PC-9 (cell line): ENCODE measurements at regions of chr7 and their contacts with region 1.

Region 1: DNA sequence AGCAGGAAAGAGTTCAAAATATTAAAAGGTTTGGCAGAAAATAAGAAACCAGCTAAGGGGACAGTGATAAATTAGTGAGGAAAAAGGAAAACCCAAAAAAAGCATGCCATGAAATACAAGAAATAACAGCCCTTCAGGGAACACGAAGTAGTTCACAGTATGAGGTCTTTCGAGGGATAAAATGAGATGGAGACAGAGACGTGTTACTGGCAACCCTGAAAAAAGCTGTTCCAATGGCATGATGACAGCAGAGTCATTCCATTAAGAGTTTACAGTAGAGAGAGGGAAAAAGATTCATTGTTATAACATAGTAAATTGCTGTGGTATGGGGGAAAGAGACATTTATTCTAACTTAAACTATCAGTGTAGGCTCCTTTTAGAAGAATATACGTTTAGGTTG is 391.2 kb downstream of the ANKRD7 start:
- DNase-seq: no peak
- H3K4me3 ChIP-seq: no peak overlapping the region
- H3K27ac ChIP-seq: no peak overlapping the region
- H3K4me1 ChIP-seq: no peaks in the 10 kb centered on the region
- H3K27me3 ChIP-seq: no peaks in the 10 kb centered on the region
- CTCF ChIP-seq: no peak

Region 2: DNA sequence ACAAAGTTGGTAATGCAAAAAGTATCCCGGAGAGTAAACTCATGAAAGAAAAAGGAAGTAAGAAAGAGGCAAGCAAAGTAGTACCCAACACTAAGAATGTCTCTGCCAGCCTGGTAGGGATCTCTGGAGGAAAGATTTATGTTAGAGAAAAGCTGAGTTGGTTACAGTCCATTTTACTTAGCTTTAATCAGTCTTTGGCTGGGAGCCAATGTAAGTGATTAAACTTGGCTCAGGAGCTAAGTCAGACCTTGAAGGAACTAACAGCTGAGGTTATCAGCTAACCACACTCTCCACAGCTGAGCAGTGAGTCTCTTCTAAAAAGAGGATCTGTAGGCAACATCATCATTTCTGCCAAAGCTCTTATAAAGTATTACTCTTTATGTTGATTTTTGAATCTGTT is 243.2 kb before region 1 on chr7:
- CTCF ChIA-PET with region 1: no interaction called
- POLR2A ChIA-PET with region 1: no interaction called
- intact Hi-C with region 1: no loop called
- DNase-seq: no peak
- H3K4me3 ChIP-seq: no peak overlapping the region
- H3K27ac ChIP-seq: no peak overlapping the region
- H3K4me1 ChIP-seq: no peaks in the 10 kb centered on the region
- H3K27me3 ChIP-seq: no peaks in the 10 kb centered on the region
- CTCF ChIP-seq: no peak

Region 3: DNA sequence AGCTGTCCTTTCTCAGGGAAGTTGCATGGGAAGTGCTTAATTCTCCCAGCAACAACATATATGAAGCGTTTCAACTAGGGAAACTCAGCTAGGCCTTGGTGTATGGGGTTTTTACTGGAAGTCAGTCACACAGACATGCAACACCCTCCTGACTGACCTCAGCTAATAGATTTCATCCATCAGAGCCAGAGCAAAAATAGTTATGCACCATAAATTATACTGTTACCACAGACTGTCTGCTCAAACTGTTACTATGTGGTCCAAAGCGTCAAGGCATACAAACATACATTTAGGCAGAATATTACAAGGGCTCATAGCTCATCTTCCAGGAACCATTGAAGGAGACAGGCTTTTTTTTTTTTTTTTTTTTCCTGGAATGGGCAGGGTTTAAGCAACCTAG is 26.7 kb after region 1 on chr7:
- CTCF ChIA-PET with region 1: no interaction called
- POLR2A ChIA-PET with region 1: no interaction called
- intact Hi-C with region 1: loop called (anchors 1 kb)
- DNase-seq: no peak
- H3K4me3 ChIP-seq: no peak overlapping the region
- H3K27ac ChIP-seq: no peak overlapping the region
- H3K4me1 ChIP-seq: no peaks in the 10 kb centered on the region
- H3K27me3 ChIP-seq: no peaks in the 10 kb centered on the region
- CTCF ChIP-seq: no peak

Region 4: DNA sequence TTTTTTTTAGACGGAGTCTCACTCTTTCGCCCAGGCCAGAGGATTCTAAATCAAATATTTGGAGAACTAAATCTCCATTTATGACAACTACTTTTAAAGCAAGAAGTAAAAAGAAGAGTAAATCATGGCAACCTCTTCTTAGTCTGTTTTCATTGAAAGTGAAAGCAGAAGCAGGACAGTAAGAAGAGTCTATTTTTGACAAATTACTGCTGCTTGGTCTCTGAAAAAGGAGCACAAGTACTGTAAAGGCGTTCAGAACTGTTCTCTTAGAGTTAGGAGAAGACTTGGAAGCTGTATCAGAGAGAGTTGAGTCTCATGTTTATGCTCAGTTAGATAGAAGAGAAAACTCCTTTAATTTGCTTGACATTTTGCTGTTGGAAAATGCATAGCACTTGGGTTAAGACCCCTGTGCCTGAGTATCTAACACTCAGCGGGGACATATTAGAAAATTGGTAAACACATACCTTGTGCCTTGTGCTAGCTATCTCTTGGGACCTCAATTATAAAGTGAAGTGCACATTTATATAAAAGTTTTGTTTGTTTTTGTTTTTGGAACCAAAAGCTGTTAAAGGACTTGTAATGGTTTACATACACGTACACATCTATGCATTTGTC is 41.8 kb after region 1 on chr7:
- CTCF ChIA-PET with region 1: no interaction called
- POLR2A ChIA-PET with region 1: no interaction called
- intact Hi-C with region 1: no loop called
- DNase-seq: no peak
- H3K4me3 ChIP-seq: no peak overlapping the region
- H3K27ac ChIP-seq: no peak overlapping the region
- H3K4me1 ChIP-seq: no peaks in the 10 kb centered on the region
- H3K27me3 ChIP-seq: no peaks in the 10 kb centered on the region
- CTCF ChIP-seq: no peak

Region 5: DNA sequence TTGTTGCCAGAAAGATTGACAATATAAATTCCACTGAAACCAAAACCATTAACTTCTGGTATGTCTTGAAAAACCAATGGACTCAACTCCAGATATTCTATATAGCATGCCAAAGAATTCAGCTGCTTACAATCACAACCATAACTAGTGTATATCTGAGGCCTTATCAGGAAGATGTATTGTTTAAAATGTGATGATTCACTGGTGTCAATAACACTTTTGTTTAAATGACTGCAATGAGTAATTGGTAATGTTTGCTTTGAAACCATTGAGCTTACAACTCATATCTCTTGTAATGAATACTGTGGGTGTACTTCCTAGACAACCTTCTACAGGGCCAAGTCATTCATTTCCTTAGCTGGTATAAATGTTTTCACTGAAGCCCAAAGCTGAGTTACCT is 929.4 kb after region 1 on chr7:
- CTCF ChIA-PET with region 1: no interaction called
- POLR2A ChIA-PET with region 1: no interaction called
- intact Hi-C with region 1: loop called (anchors 5 kb)
- DNase-seq: peak in 1 of 2 experiments; percentile 86
- H3K4me3 ChIP-seq: no peak overlapping the region
- H3K27ac ChIP-seq: no peak overlapping the region
- H3K4me1 ChIP-seq: 0 out of 2 replicates have a peak, but pooled peaks cover 4% of the 10 kb centered on the region
- H3K27me3 ChIP-seq: peaks cover 17% of the 10 kb centered on the region
- CTCF ChIP-seq: no peak